PC-9 (cell line): ENCODE measurements at regions of chr20 and their contacts with region 1.

Region 1: DNA sequence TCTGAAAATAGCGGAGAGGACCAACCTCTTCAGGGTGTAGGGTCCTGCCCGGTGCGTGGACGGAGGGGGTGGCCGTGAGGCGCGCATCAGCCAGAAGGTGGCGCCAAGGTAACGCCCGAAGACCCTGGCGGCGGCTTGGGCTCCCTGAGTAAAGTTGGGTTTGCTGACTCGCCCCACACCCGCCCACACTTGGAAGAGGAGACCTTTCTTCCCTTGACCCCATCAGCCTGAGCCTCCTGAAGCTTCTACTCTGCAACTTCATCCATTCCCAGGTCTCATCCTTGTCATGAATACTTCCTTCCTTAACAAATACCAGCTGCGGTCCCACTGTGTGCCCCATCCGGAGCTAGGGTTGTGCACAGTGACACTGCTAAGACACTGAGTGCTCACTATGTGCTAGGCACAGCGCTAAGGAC is 14.6 kb downstream of the CD40 start:
- DNase-seq: peak in 1 of 2 experiments; percentile 72
- H3K4me3 ChIP-seq: no peak overlapping the region
- H3K27ac ChIP-seq: no peak overlapping the region
- H3K4me1 ChIP-seq: peaks cover 3% of the 10 kb centered on the region
- H3K27me3 ChIP-seq: peaks cover 90% of the 10 kb centered on the region
- CTCF ChIP-seq: peak; percentile 90

Region 2: GRCh38 chr20:45507011-45507820 is 625.5 kb before region 1 on chr20:
- CTCF ChIA-PET with region 1: no interaction called
- POLR2A ChIA-PET with region 1: no interaction called
- intact Hi-C with region 1: no loop called
- DNase-seq: peak in 1 of 2 experiments; percentile 86
- H3K4me3 ChIP-seq: peak overlapping the region; percentile 7; the same call in 1 of the 2 replicates
- H3K27ac ChIP-seq: peak overlapping the region; percentile 95
- H3K4me1 ChIP-seq: peaks cover 45% of the 10 kb centered on the region
- H3K27me3 ChIP-seq: no peaks in the 10 kb centered on the region
- CTCF ChIP-seq: no peak

Region 3: DNA sequence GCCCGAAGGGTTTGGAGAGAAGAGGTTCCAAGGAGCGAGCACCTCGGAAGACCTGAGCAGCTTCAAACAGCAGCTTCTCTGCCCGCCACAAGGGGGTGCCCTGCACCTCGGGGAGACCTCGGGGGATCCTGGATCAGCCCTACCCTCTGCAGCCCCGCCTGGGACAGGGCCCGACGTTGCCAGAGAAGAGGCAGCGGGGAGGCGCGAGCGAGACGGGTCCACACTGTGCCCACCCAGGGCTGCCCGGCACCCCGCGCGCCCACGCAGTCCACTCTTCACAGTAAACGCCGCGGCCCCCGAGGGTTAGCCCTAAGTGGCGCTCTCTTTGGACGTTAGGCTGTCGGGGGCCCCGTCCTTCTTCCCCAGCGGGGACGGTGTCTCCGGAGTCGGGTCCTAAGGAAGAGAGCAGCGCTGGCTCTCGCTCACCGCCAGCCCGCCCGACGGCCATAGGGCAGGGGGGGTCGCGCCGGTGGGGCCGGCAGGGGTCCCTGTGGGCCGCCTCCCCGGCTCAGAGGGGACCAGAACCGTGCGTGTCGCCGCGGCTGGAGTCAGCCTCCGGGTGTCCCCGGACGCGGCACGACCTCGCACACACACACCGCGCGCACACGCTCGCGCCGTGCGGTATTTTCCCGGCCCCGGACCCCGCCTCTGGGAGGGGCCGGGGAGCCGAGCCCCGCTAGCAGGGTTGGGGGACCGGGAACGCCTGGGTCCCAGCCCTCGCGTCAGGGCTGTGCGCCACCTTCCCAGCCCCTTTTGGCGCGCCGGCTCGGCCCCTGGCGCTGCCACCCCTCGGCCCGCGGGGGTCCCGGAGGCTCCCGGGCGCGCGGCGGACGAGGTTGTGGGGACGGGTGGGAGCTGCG is 174.7 kb after region 1 on chr20:
- CTCF ChIA-PET with region 1: no interaction called
- POLR2A ChIA-PET with region 1: no interaction called
- intact Hi-C with region 1: loop called (anchors 5 kb)
- DNase-seq: peak; percentile 43 to 55
- H3K4me3 ChIP-seq: no peak overlapping the region
- H3K27ac ChIP-seq: no peak overlapping the region
- H3K4me1 ChIP-seq: no peaks in the 10 kb centered on the region
- H3K27me3 ChIP-seq: peaks cover 85% of the 10 kb centered on the region
- CTCF ChIP-seq: peak; percentile 88

Region 4: GRCh38 chr20:46324960-46325703 is 192.4 kb after region 1 on chr20:
- CTCF ChIA-PET with region 1: no interaction called
- POLR2A ChIA-PET with region 1: no interaction called
- intact Hi-C with region 1: loop called (anchors 5 kb)
- DNase-seq: peak in 1 of 2 experiments; percentile 40
- H3K4me3 ChIP-seq: no peak overlapping the region
- H3K27ac ChIP-seq: no peak overlapping the region
- H3K4me1 ChIP-seq: no peaks in the 10 kb centered on the region
- H3K27me3 ChIP-seq: peaks cover 90% of the 10 kb centered on the region
- CTCF ChIP-seq: peak; percentile 70

Region 5: DNA sequence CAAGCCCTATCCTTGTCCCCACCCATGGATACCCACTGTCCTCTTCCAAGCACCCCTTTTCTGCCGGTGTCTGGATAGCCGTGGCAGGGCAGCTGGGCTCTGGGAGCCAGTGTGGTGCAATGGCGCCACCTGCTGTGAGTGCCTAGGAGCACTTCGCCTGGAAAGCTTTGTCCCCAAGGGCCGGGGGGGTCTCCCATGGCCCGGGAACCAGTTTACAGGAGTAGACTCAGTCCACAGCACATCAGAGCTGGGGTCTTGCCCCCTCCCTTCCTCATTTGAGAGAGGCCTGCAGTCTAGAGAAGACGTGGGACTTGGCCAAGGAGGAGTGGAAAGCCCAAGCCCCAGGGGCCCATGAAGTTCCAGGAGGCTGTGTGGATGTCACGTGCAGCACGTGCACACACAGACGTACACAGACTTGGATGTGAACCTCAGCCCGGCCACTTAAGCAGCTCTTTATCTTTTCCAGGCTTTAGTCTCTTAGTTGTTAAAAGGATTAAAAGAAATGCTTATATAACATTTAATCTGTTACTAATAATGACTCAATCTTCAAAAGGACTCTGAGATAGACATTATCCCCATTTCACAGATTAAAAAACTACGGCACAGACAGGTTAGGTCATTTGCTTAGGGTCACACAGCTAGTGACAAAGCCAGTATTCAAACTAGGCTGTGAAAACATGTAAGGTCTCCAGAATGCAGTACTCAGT is 216.5 kb after region 1 on chr20:
- CTCF ChIA-PET with region 1: interaction called, 4 read pairs
- POLR2A ChIA-PET with region 1: no interaction called
- intact Hi-C with region 1: loop called (anchors 2 kb)
- DNase-seq: peak in 1 of 2 experiments; percentile 46
- H3K4me3 ChIP-seq: no peak overlapping the region
- H3K27ac ChIP-seq: no peak overlapping the region
- H3K4me1 ChIP-seq: no peaks in the 10 kb centered on the region; the same call in 1 of the 2 replicates
- H3K27me3 ChIP-seq: no peaks in the 10 kb centered on the region
- CTCF ChIP-seq: peak; percentile 77

Region 6: GRCh38 chr20:46411637-46412036 is 278.9 kb after region 1 on chr20:
- CTCF ChIA-PET with region 1: no interaction called
- POLR2A ChIA-PET with region 1: no interaction called
- intact Hi-C with region 1: loop called (anchors 1 kb)
- DNase-seq: no peak
- H3K4me3 ChIP-seq: no peak overlapping the region
- H3K27ac ChIP-seq: no peak overlapping the region
- H3K4me1 ChIP-seq: peaks cover 19% of the 10 kb centered on the region
- H3K27me3 ChIP-seq: peaks cover 48% of the 10 kb centered on the region
- CTCF ChIP-seq: no peak

Region 7: DNA sequence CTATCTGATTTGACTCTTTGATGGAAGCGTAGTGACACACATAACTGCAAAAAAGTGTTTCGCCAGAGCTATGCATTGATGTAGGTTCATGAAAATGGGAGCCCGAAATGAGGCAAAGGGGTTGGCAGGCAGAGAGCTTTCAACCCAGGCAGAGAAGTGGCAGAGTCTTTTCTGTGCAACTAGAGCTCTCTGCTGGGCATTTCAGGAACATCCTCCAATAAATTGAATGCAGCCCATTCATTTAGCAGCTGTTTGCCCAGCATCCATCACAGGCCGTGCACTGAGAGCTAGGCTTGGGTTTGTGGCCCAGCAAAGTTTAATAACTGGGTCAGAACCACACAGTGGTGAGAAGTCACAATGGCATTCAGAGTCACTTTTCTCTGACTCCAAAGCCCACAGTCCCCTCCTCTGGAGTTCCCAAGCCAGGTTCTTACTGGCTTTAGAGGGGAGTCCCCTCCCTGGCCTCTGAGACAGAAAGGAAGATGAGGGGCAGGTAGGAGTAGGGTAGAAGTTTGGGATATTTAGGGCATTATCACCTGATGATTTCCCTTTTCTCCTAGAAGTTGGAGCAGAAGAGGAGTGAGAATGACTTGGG is 305.5 kb after region 1 on chr20:
- CTCF ChIA-PET with region 1: interaction called, 3 read pairs
- POLR2A ChIA-PET with region 1: no interaction called
- intact Hi-C with region 1: loop called (anchors 1 kb)
- DNase-seq: peak; percentile 29 to 53
- H3K4me3 ChIP-seq: no peak overlapping the region
- H3K27ac ChIP-seq: no peak overlapping the region
- H3K4me1 ChIP-seq: no peaks in the 10 kb centered on the region
- H3K27me3 ChIP-seq: peaks cover 88% of the 10 kb centered on the region
- CTCF ChIP-seq: peak; percentile 62